Heart left ventricle (tissue), 16 donors: ENCODE measurements at regions of chr9 and their contacts with region 1.

Region 1: GRCh38 chr9:121326130-121326838 is 43.8 kb downstream of the STOM start:
- DNase-seq: peak; percentile 89 to 95 (median 92)
- ATAC-seq: peak; percentile 89 to 94 (median 94)
- H3K4me3 ChIP-seq: peak overlapping the region in 3 of 12 donors; percentile 9 to 29 (median 22)
- H3K27ac ChIP-seq: peak overlapping the region; percentile 80 to 98 (median 93)
- H3K4me1 ChIP-seq: peaks cover 6 to 94% (median 54%) of the 10 kb centered on the region in 12 donors
- H3K27me3 ChIP-seq: no peaks in the 10 kb centered on the region
- CTCF ChIP-seq: no peak
- POLR2A ChIP-seq: peak in 1 of 2 donors; percentile 40

Region 2: GRCh38 chr9:121344184-121344583 is 17.9 kb after region 1 on chr9:
- intact Hi-C with region 1: loop called in 2 of 10 experiments (anchors 2 kb)
- DNase-seq: no peak
- ATAC-seq: no peak
- H3K4me3 ChIP-seq: no peak overlapping the region
- H3K27ac ChIP-seq: peak overlapping the region in 9 of 12 donors; percentile 1 to 63 (median 22)
- H3K4me1 ChIP-seq: peaks cover 3 to 60% (median 22%) of the 10 kb centered on the region in 12 donors
- H3K27me3 ChIP-seq: no peaks in the 10 kb centered on the region
- CTCF ChIP-seq: no peak
- POLR2A ChIP-seq: no peak

Region 3: GRCh38 chr9:121350993-121351561 is 24.8 kb after region 1 on chr9:
- intact Hi-C with region 1: loop called in 2 of 10 experiments (anchors 1 to 2 kb)
- DNase-seq: peak in 4 of 5 donors; percentile 77 to 85 (median 80)
- ATAC-seq: peak; percentile 48 to 62 (median 58)
- H3K4me3 ChIP-seq: peak overlapping the region in 1 of 12 donors; percentile 5
- H3K27ac ChIP-seq: peak overlapping the region; percentile 35 to 97 (median 90)
- H3K4me1 ChIP-seq: peaks cover 19 to 94% (median 73%) of the 10 kb centered on the region in 12 donors
- H3K27me3 ChIP-seq: no peaks in the 10 kb centered on the region
- CTCF ChIP-seq: no peak
- POLR2A ChIP-seq: no peak

Region 4: GRCh38 chr9:121463026-121463807 is 136.9 kb after region 1 on chr9:
- intact Hi-C with region 1: no loop called
- DNase-seq: peak; percentile 51 to 73 (median 59)
- ATAC-seq: peak in 3 of 4 donors; percentile 58 to 81 (median 65)
- H3K4me3 ChIP-seq: no peak overlapping the region
- H3K27ac ChIP-seq: no peak overlapping the region
- H3K4me1 ChIP-seq: peaks cover 0 to 24% (median 9%) of the 10 kb centered on the region in 12 donors
- H3K27me3 ChIP-seq: no peaks in the 10 kb centered on the region
- CTCF ChIP-seq: peak; percentile 63 to 88 (median 80)
- POLR2A ChIP-seq: no peak